ENCODE measurements at regions of chr20 and their contacts with region 1.

Region 1: DNA sequence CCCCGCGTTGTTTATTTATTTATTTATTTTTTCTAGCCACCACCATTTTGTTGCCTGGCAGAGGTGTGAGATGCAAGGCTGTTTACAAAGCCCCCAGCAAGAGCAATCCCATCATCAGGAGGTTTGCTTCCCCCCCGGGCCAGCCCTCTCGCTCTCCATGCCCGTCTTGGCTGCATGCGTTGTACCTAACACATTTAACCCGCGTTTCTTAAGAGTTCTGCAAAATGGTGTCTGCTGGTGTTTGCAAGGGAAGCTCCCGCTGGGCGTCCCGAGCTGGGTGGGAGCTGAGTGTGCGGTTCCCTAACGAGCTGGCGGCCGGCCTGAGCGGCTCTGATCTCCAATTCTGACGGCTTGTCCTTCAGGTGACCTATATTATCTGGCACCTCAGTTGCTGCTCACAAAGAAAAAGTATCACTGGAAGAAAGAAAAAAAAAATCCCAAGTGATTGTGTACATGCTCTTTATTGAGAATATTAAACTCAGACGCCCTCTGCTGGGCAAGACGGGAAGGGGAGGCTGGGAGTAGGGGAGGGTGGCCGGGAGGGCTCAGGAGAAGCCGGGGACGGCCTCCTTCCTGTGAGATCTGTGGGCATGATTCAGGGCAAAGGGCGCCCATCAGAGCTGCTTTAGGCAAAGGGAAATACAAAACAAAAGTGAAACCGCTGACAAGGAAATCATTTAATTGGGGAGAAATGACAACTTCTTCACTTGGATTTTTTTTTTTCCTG is 154.8 kb downstream of the BCAS1 start:
- DNase-seq: peak; percentile 97 to 99
- H3K4me3 ChIP-seq: peak overlapping the region; percentile 66 to 71
- H3K27ac ChIP-seq: peak overlapping the region; percentile 78 to 81
- H3K4me1 ChIP-seq: peaks cover 4 to 33% (median 25%) of the 10 kb centered on the region in 4 donors
- H3K27me3 ChIP-seq: no peaks in the 10 kb centered on the region
- CTCF ChIP-seq: peak; percentile 90 to 92

Region 2: DNA sequence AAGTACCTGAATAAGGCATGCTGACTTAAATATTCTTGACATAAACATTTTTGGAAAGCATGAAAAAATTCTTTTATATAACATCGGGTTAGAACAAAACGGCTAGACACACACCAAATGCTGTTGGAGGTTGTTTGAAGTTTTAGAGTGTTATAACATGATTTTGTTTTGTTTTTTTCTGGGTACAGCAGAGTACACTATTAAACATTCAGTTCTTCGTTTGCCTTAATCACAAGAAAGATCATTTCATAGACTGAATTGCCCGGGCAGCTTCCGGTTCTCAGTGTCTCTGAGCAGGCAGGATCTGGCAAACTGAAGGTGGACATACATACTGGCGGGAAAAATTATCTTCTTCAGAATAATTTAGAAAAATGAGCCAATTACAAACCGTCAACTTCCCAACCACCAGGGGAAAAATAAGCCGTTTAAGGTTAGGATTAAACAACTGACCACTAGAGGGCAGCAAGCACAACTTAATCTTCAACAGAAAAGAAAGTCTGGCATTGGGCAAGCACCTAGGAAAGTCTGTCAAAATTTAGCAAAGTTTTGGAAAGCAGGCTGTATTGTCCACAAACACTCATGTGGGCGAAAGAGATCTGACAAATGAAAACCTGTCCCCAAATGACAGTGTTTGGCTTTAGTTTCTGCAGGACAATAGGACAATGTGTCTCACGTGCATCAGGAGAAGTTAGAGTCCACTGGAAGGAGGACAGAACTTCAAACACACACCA is 337.0 kb before region 1 on chr20:
- intact Hi-C with region 1: loop called (anchors 2 kb)
- DNase-seq: peak in 1 of 2 donors; percentile 41
- H3K4me3 ChIP-seq: peak overlapping the region in 1 of 2 donors; percentile 18
- H3K27ac ChIP-seq: peak overlapping the region; percentile 34 to 54
- H3K4me1 ChIP-seq: peaks cover 0 to 37% (median 25%) of the 10 kb centered on the region in 4 donors
- H3K27me3 ChIP-seq: no peaks in the 10 kb centered on the region
- CTCF ChIP-seq: peak; percentile 79 to 99

Region 3: GRCh38 chr20:53865901-53866794 is 49.5 kb before region 1 on chr20:
- intact Hi-C with region 1: no loop called
- DNase-seq: no peak
- H3K4me3 ChIP-seq: no peak overlapping the region
- H3K27ac ChIP-seq: peak overlapping the region; percentile 44 to 51
- H3K4me1 ChIP-seq: peaks cover 0 to 26% (median 7%) of the 10 kb centered on the region in 4 donors
- H3K27me3 ChIP-seq: no peaks in the 10 kb centered on the region
- CTCF ChIP-seq: no peak

Region 4: GRCh38 chr20:53974785-53975555 is 59.4 kb after region 1 on chr20:
- intact Hi-C with region 1: no loop called
- DNase-seq: no peak
- H3K4me3 ChIP-seq: no peak overlapping the region
- H3K27ac ChIP-seq: no peak overlapping the region
- H3K4me1 ChIP-seq: no peaks in the 10 kb centered on the region
- H3K27me3 ChIP-seq: peaks cover 0 to 5% of the 10 kb centered on the region in 2 donors
- CTCF ChIP-seq: no peak

Region 5: DNA sequence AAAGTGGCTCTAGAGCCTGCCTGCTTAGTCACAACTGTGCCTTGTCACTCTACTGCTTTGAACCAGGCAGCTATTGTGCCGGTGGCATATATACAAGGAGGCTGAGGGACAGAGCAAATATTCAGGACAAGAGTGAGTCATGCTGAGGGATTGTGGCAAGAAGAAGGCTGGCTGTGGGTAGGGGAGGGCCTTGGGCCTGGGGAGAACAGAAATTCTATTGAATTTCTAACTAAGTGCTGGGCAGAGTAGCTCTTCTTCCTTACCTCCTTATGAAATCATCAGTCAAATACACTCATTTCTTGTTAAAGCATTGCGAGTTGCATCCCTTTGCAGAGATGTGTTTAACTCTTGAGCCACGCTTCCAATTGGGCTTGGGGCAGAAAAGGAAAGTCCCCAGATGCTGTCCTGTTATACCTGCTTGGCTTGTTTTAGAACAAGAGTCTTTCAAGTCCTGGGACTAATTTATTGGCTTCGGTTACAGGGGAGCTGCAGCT is 351.9 kb after region 1 on chr20:
- intact Hi-C with region 1: no loop called
- DNase-seq: no peak
- H3K4me3 ChIP-seq: no peak overlapping the region
- H3K27ac ChIP-seq: no peak overlapping the region
- H3K4me1 ChIP-seq: peaks cover 0 to 4% (median 0%) of the 10 kb centered on the region in 4 donors
- H3K27me3 ChIP-seq: no peaks in the 10 kb centered on the region
- CTCF ChIP-seq: no peak